ENCODE measurements at regions of chr6 and their contacts with region 1.

Region 1: DNA sequence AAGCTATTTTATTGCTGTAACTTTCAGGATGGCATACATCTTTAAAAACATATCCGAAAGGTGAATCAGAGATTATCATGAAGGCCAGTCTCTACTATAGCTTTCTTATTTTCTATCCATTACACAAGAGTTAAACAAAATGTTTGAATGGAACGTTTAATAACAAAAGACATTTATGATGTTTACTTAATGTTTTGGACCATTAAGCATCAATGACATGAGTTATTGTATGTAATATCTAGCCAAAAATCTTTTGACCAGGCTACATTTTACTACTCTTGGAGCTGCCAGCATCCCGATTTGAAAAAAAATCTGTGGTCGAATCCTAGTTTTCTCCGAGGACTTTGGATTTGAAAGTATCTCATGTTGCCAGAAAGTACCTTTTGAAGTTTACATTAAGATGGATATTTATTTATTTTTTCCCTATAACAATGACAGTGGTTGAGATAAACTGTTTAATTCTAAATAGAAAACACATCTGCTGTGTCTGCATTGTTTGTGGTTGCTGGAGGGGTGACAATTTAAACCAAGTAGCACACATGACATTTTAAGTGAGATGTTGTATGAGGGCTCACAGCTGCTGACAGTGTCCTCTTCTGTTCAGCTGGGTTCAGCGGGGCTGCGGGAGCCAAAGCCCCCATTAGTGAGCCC is 293.7 kb upstream of the TCF21 start:
- DNase-seq: no peak
- ATAC-seq: no peak
- H3K4me3 ChIP-seq: no peak overlapping the region
- H3K27ac ChIP-seq: no peak overlapping the region
- H3K4me1 ChIP-seq: no peaks in the 10 kb centered on the region
- H3K27me3 ChIP-seq: no peaks in the 10 kb centered on the region
- CTCF ChIP-seq: no peak

Region 2: GRCh38 chr6:133277900-133278545 is 317.2 kb before region 1 on chr6:
- intact Hi-C with region 1: loop called in 1 of 10 experiments (anchors 5 kb)
- DNase-seq: no peak
- ATAC-seq: peak in 1 of 8 donors; percentile 22
- H3K4me3 ChIP-seq: no peak overlapping the region
- H3K27ac ChIP-seq: no peak overlapping the region
- H3K4me1 ChIP-seq: no peaks in the 10 kb centered on the region
- H3K27me3 ChIP-seq: no peaks in the 10 kb centered on the region
- CTCF ChIP-seq: no peak